ENCODE measurements at regions of chr2 and their contacts with region 1.

Region 1: GRCh38 chr2:9555297-9556141 is at the start of gene ADAM17:
- DNase-seq: peak; percentile 97 to 99
- H3K4me3 ChIP-seq: peak within 1 kb of the TSS; percentile 78 to 88
- H3K27ac ChIP-seq: peak within 1 kb of the TSS; percentile 98
- H3K4me1 ChIP-seq: peaks cover 0 to 73% (median 44%) of the 10 kb centered on the region in 4 donors
- H3K27me3 ChIP-seq: no peaks in the 10 kb centered on the region
- CTCF ChIP-seq: peak; percentile 53 to 68

Region 2: DNA sequence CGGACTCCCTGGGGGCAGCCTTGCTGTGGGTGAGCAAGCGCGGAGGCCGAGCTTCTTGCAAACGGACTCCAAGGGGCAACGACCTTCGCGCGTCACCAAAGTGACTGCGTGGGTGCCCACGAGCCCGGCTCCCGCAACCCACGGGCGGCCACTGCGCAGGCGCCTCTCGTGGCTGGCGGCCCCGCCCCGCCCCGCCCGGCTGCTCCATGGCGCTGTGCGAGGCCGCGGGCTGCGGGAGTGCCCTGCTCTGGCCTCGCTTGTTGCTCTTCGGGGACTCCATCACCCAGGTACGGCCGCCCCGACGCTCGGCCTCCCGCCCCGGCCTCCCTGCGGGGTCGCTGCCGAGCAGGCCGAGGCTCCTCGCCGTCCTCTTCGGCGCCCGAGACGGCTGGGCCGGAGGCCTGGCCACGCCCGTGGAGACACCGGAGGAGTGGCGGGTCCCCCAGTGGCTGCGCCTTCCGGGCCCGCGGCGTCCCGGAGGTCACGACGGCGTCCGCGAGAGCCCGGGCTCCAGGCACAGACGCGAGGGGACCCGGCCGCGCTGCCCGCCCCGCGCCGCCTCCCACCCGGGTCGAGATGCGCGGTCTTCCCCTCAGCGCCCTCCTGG is 81.1 kb before region 1 on chr2 and contains the start of gene IAH1:
- intact Hi-C with region 1: loop called (anchors 10 kb)
- DNase-seq: peak; percentile 46 to 78
- H3K4me3 ChIP-seq: peak within 1 kb of the TSS; percentile 81 to 83
- H3K27ac ChIP-seq: peak within 1 kb of the TSS; percentile 86 to 94
- H3K4me1 ChIP-seq: peaks cover 0 to 54% (median 25%) of the 10 kb centered on the region in 4 donors
- H3K27me3 ChIP-seq: no peaks in the 10 kb centered on the region
- CTCF ChIP-seq: no peak

Region 3: DNA sequence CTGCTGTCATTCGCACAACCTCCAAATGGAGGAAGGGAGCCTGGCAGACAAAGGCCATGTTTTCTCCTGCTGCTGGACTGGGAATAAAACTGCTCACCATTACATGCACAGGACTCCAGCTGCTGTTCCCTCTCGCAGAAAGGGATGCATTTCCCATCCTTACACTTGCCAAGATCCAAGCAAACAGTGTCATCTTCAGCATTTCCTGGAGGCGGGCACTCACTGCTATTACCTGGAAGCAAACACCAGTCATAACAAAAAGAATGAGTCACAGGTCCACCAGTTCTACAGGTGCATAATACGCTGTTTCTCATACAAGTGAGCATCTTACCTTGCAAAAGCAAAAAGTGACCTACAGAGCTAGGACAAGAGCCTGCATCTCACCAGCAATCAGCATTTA is 58.5 kb before region 1 on chr2:
- intact Hi-C with region 1: no loop called
- DNase-seq: no peak
- H3K4me3 ChIP-seq: no peak overlapping the region
- H3K27ac ChIP-seq: no peak overlapping the region
- H3K4me1 ChIP-seq: peaks cover 0 to 28% (median 9%) of the 10 kb centered on the region in 4 donors
- H3K27me3 ChIP-seq: no peaks in the 10 kb centered on the region
- CTCF ChIP-seq: no peak

Measured in tibial artery (tissue), 4 donors.